ENCODE measurements at regions of chr11 and their contacts with region 1.

Region 1: GRCh38 chr11:57249384-57250319 is 12.6 kb upstream of the APLNR start:
- DNase-seq: peak; percentile 62
- H3K4me3 Mint-ChIP-seq: no peak overlapping the region
- H3K27ac Mint-ChIP-seq: no peak overlapping the region
- H3K4me1 Mint-ChIP-seq: peaks cover 10% of the 10 kb centered on the region
- H3K27me3 Mint-ChIP-seq: no peaks in the 10 kb centered on the region
- CTCF ChIP-seq: peak; percentile 93

Region 2: GRCh38 chr11:56624661-56625110 is 625.0 kb before region 1 on chr11:
- CTCF ChIA-PET with region 1: interaction called, 32 read pairs
- POLR2A ChIA-PET with region 1: no interaction called
- intact Hi-C with region 1: loop called (anchors 1 kb)
- DNase-seq: peak; percentile 77
- H3K4me3 Mint-ChIP-seq: no peak overlapping the region
- H3K27ac Mint-ChIP-seq: no peak overlapping the region
- H3K4me1 Mint-ChIP-seq: no peaks in the 10 kb centered on the region
- H3K27me3 Mint-ChIP-seq: peaks cover 17% of the 10 kb centered on the region
- CTCF ChIP-seq: peak; percentile 41

Region 3: GRCh38 chr11:56910785-56911184 is 338.9 kb before region 1 on chr11:
- CTCF ChIA-PET with region 1: interaction called, 10 read pairs
- POLR2A ChIA-PET with region 1: no interaction called
- intact Hi-C with region 1: no loop called
- DNase-seq: peak; percentile 43
- H3K4me3 Mint-ChIP-seq: no peak overlapping the region
- H3K27ac Mint-ChIP-seq: peak overlapping the region; percentile 42
- H3K4me1 Mint-ChIP-seq: peaks cover 20% of the 10 kb centered on the region
- H3K27me3 Mint-ChIP-seq: no peaks in the 10 kb centered on the region
- CTCF ChIP-seq: no peak

Region 4: DNA sequence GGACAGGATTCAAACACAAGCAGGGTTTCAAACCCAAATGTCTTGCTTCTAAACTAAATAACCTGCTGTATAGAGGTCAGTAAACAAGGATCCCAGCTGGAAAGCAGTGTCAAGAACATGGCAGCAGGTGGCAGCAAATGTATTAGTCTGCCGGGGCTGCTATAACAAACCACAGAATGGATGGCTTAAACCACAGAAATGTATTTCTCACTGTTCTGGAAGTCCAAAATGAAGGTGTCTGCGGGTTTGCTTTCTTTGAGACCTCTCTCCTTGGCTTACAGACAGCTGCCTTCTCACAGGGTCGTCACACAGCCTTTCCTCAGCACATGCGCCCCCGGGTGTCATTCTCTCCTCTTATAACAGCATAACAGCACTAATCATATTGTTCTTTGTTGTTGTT is 133.0 kb before region 1 on chr11:
- CTCF ChIA-PET with region 1: interaction called, 324 read pairs
- POLR2A ChIA-PET with region 1: no interaction called
- intact Hi-C with region 1: loop called (anchors 1 kb)
- DNase-seq: peak; percentile 58
- H3K4me3 Mint-ChIP-seq: no peak overlapping the region
- H3K27ac Mint-ChIP-seq: no peak overlapping the region
- H3K4me1 Mint-ChIP-seq: no peaks in the 10 kb centered on the region
- H3K27me3 Mint-ChIP-seq: no peaks in the 10 kb centered on the region
- CTCF ChIP-seq: peak; percentile 47

Region 5: GRCh38 chr11:57163160-57163868 is 86.3 kb before region 1 on chr11:
- CTCF ChIA-PET with region 1: interaction called, 18 read pairs
- POLR2A ChIA-PET with region 1: no interaction called
- intact Hi-C with region 1: no loop called
- DNase-seq: no peak
- H3K4me3 Mint-ChIP-seq: no peak overlapping the region
- H3K27ac Mint-ChIP-seq: no peak overlapping the region
- H3K4me1 Mint-ChIP-seq: peaks cover 11% of the 10 kb centered on the region
- H3K27me3 Mint-ChIP-seq: no peaks in the 10 kb centered on the region
- CTCF ChIP-seq: no peak

Region 6: GRCh38 chr11:57237204-57237681 is 12.4 kb before region 1 on chr11 and contains the start of gene APLNR:
- CTCF ChIA-PET with region 1: interaction called, 54 read pairs
- POLR2A ChIA-PET with region 1: no interaction called
- intact Hi-C with region 1: no loop called
- DNase-seq: no peak
- H3K4me3 Mint-ChIP-seq: no peak within 1 kb of the TSS
- H3K27ac Mint-ChIP-seq: no peak within 1 kb of the TSS
- H3K4me1 Mint-ChIP-seq: no peaks in the 10 kb centered on the region
- H3K27me3 Mint-ChIP-seq: peaks cover 23% of the 10 kb centered on the region
- CTCF ChIP-seq: no peak
- total RNA-seq, gene APLNR: not detected in 2 replicates

Region 7: GRCh38 chr11:57324886-57325734 is 75.5 kb after region 1 on chr11 and contains the start of gene TNKS1BP1:
- CTCF ChIA-PET with region 1: interaction called, 7 read pairs
- POLR2A ChIA-PET with region 1: interaction called, 3 read pairs
- intact Hi-C with region 1: loop called (anchors 1 kb)
- DNase-seq: peak; percentile 98
- H3K4me3 Mint-ChIP-seq: peak within 1 kb of the TSS; percentile 75
- H3K27ac Mint-ChIP-seq: peak within 1 kb of the TSS; percentile 97
- H3K4me1 Mint-ChIP-seq: peaks cover 48% of the 10 kb centered on the region
- H3K27me3 Mint-ChIP-seq: no peaks in the 10 kb centered on the region
- CTCF ChIP-seq: no peak
- total RNA-seq, gene TNKS1BP1: 198 and 202 TPM in 2 replicates

Measured in MCF 10A (cell line).